T-cell (primary cell): ENCODE measurements at regions of chr1 and their contacts with region 1.

Region 1: DNA sequence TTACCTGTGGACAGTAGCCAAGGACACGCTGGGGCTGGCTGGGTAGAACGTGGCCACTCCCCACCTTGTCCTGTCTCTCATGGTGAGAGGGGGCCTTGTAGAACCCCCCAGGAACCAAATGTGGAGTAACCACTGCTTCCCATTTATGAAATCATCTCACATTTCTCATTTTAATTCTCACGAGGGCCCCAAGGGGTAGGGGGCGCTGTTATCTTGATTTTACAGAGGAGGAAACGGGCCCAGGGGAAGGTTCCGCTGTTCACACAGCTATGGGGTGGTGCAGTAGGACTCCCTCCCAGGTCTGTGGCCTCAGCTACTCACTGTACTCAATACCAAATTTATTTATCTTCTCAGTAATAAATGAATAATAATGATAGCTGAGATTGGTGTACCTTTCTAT is 5.5 kb downstream of the SMPDL3B start:
- DNase-seq: peak; percentile 58 to 84 (median 74)
- ATAC-seq: peak; percentile 80 to 89 (median 86)
- H3K4me3 ChIP-seq: no peak overlapping the region
- H3K4me3 Mint-ChIP-seq: no peak overlapping the region
- H3K27ac ChIP-seq: peak overlapping the region; percentile 52
- H3K27ac Mint-ChIP-seq: peak overlapping the region; percentile 77 to 79
- H3K4me1 ChIP-seq: peaks cover 11 to 31% of the 10 kb centered on the region in 2 experiments
- H3K4me1 Mint-ChIP-seq: peaks cover 24 to 51% (median 49%) of the 10 kb centered on the region in 3 donors
- H3K27me3 ChIP-seq: peaks cover 0 to 8% of the 10 kb centered on the region in 2 experiments
- H3K27me3 Mint-ChIP-seq: peaks cover 6 to 7% of the 10 kb centered on the region in 2 donors

Region 2: DNA sequence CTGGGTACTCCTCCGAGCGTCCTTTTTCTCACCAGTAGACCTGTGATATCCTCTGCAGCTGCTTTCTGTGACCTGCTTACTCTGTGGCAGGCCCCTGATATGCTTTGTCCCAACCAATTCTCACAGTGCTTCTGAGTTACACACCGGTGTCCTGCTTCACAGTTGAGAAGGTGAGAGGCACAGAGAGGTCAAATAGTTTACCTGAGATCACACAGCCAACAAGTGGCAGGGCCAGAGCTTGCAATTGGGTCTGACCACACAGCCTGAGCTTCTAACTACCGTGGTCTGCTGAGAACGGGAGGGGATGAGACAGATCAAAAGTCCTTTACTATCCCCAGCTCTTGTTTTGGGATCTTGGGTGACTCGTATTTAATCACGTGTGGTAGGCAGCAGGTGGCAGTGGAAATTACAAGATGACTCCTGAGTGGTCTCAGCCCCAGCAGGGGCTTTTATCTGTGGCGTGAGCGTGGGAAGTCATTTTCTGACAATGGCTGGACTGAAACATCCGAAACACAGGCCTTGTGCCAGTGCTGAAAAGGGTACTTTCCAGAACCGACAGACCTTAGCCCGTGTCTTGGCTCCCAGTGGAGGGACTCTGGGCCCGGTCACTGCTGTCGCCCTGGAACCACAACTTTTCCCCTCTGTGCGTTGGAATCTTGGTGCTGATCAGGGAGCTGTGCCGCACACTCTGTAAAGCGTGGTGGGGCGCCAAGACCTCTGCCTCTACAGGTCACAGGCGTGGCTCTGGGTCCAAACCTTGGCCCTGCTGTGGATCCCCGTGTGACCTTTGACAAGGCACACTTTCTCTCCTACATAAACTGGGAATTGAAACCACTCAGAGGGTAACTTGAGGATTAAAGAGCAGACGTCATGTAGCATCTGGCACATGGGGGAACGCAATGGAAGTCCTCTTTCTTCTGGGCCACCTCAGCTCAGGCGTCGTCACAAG is 56.0 kb before region 1 on chr1:
- CTCF ChIA-PET with region 1: no interaction called
- POLR2A ChIA-PET with region 1: no interaction called
- DNase-seq: no peak
- ATAC-seq: no peak
- H3K4me3 ChIP-seq: no peak overlapping the region
- H3K4me3 Mint-ChIP-seq: peak overlapping the region in 1 of 3 donors; percentile 20
- H3K27ac ChIP-seq: peak overlapping the region; percentile 75
- H3K27ac Mint-ChIP-seq: peak overlapping the region in 1 of 2 donors; percentile 99
- H3K4me1 ChIP-seq: peaks cover 16 to 71% of the 10 kb centered on the region in 2 experiments
- H3K4me1 Mint-ChIP-seq: peaks cover 21 to 74% (median 68%) of the 10 kb centered on the region in 3 donors
- H3K27me3 ChIP-seq: no peaks in the 10 kb centered on the region
- H3K27me3 Mint-ChIP-seq: no peaks in the 10 kb centered on the region

Region 3: DNA sequence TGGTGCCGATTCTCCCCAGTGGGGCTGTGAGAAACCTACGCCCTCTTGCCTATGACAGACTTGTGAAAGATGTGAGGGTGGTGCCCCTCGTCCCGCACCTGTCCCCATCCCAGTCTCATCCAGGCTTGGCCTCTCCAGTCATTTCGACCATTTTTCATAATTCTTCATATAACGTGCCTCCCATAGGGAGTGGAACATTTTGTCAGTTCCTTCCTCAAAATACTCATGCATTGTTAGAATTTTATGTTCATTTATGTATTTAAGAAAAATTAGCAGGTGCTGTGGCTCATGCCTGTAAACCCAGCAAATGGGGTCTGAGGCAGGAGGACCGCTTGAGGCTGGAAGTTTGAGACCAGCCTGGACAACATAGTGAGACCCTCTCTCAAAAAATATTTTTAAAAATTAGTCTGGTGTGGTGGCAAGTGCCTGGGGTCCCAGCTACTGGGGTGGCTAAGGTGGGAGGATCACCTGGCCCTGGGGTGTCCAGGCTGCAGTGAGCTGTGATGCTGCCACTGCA is 25.2 kb before region 1 on chr1:
- CTCF ChIA-PET with region 1: no interaction called
- POLR2A ChIA-PET with region 1: interaction called, 3 to 16 read pairs
- DNase-seq: no peak
- ATAC-seq: no peak
- H3K4me3 ChIP-seq: peak overlapping the region in 1 of 2 donors; percentile 85
- H3K4me3 Mint-ChIP-seq: peak overlapping the region; percentile 98 to 100 (median 99)
- H3K27ac ChIP-seq: peak overlapping the region; percentile 94
- H3K27ac Mint-ChIP-seq: peak overlapping the region; percentile 92 to 97
- H3K4me1 ChIP-seq: peaks cover 4 to 23% of the 10 kb centered on the region in 2 experiments
- H3K4me1 Mint-ChIP-seq: peaks cover 21 to 25% (median 23%) of the 10 kb centered on the region in 3 donors
- H3K27me3 ChIP-seq: peaks cover 0 to 4% of the 10 kb centered on the region in 2 experiments
- H3K27me3 Mint-ChIP-seq: peaks cover 0 to 4% of the 10 kb centered on the region in 2 donors

Region 4: GRCh38 chr1:27968694-27969093 is 28.4 kb after region 1 on chr1:
- CTCF ChIA-PET with region 1: no interaction called
- POLR2A ChIA-PET with region 1: no interaction called
- DNase-seq: no peak
- ATAC-seq: no peak
- H3K4me3 ChIP-seq: no peak overlapping the region
- H3K4me3 Mint-ChIP-seq: no peak overlapping the region
- H3K27ac ChIP-seq: no peak overlapping the region
- H3K27ac Mint-ChIP-seq: peak overlapping the region; percentile 40 to 74
- H3K4me1 ChIP-seq: no peaks in the 10 kb centered on the region
- H3K4me1 Mint-ChIP-seq: peaks cover 12 to 31% (median 20%) of the 10 kb centered on the region in 3 donors
- H3K27me3 ChIP-seq: no peaks in the 10 kb centered on the region
- H3K27me3 Mint-ChIP-seq: no peaks in the 10 kb centered on the region

Region 5: DNA sequence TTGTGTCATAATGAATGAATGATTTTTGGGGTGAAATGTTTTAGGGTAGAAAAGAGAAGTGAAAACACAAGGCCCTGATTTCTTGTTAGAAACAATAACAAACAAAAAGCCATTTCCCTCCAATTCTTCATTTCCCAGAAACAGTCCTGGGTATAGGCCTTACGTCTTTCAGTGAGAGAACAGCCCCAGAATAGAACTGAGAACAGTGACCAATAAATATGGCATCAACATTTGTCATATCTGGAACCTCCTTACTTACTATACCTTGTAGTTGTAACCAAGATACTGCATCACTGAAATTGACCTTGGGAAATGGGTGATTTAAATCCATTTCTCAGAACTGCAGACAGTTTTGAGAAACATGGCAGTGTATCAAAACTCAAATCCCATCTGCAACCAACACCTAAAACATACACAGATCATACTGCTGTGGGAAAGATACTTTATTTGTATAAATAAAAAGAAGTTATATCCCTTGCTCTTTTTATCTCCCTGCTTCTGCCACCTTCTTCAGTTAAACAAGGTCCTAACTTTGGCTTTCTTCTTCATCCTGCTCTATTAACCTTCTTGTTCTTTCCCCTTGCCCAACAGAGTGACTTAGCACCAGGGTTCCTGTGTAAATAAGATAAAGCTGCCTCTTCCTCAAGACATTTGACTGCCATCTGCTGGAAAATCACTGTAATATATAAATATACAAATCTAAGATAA is 39.0 kb after region 1 on chr1:
- CTCF ChIA-PET with region 1: interaction called, 3 to 28 read pairs
- POLR2A ChIA-PET with region 1: no interaction called
- DNase-seq: peak in 3 of 35 experiments; percentile 19 to 72 (median 26)
- ATAC-seq: peak; percentile 66 to 73 (median 72)
- H3K4me3 ChIP-seq: no peak overlapping the region
- H3K4me3 Mint-ChIP-seq: no peak overlapping the region
- H3K27ac ChIP-seq: no peak overlapping the region
- H3K27ac Mint-ChIP-seq: no peak overlapping the region
- H3K4me1 ChIP-seq: no peaks in the 10 kb centered on the region
- H3K4me1 Mint-ChIP-seq: no peaks in the 10 kb centered on the region
- H3K27me3 ChIP-seq: no peaks in the 10 kb centered on the region
- H3K27me3 Mint-ChIP-seq: no peaks in the 10 kb centered on the region

Region 6: GRCh38 chr1:28104866-28105467 is 164.7 kb after region 1 on chr1:
- CTCF ChIA-PET with region 1: no interaction called
- POLR2A ChIA-PET with region 1: no interaction called
- DNase-seq: no peak
- ATAC-seq: no peak
- H3K4me3 ChIP-seq: no peak overlapping the region
- H3K4me3 Mint-ChIP-seq: no peak overlapping the region
- H3K27ac ChIP-seq: no peak overlapping the region
- H3K27ac Mint-ChIP-seq: no peak overlapping the region
- H3K4me1 ChIP-seq: no peaks in the 10 kb centered on the region
- H3K4me1 Mint-ChIP-seq: no peaks in the 10 kb centered on the region
- H3K27me3 ChIP-seq: no peaks in the 10 kb centered on the region
- H3K27me3 Mint-ChIP-seq: no peaks in the 10 kb centered on the region